Caco-2 (cell line): ENCODE measurements at regions of chr9 and their contacts with region 1.

Region 1: DNA sequence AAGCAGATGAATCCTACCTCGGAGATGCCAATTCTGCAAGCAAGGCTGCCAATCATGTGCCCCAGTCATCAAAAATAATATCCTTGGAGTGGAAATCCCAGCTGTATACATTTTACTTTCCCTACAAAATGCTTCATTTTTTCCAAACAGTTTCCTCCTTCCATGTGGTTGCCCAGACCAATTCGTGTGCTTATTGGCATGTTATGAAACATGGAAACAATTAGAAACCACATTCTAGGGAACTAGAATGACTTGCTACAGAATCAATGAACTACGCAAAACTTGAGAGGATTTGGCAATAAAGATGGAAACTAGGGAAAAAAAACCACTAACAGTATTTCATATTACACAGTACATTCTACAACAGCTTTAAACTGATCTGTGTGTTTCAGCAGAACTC is 584.5 kb upstream of the DMAC1 start:
- DNase-seq: no peak
- H3K4me3 ChIP-seq: no peak overlapping the region
- H3K4me3 Mint-ChIP-seq: peak overlapping the region; percentile 18
- H3K27ac Mint-ChIP-seq: peak overlapping the region; percentile 90
- H3K4me1 ChIP-seq: peaks cover 60% of the 10 kb centered on the region
- H3K4me1 Mint-ChIP-seq: peaks cover 22% of the 10 kb centered on the region
- H3K27me3 ChIP-seq: no peaks in the 10 kb centered on the region
- H3K27me3 Mint-ChIP-seq: no peaks in the 10 kb centered on the region
- CTCF ChIP-seq: no peak

Region 2: GRCh38 chr9:7799234-7799943 is 584.7 kb before region 1 on chr9 and contains the start of gene DMAC1:
- CTCF ChIA-PET with region 1: no interaction called
- POLR2A ChIA-PET with region 1: no interaction called
- intact Hi-C with region 1: loop called (anchors 5 kb)
- DNase-seq: peak; percentile 77 to 78
- H3K4me3 ChIP-seq: peak within 1 kb of the TSS; percentile 81
- H3K4me3 Mint-ChIP-seq: peak within 1 kb of the TSS; percentile 93
- H3K27ac Mint-ChIP-seq: peak within 1 kb of the TSS; percentile 90
- H3K4me1 ChIP-seq: peaks cover 8% of the 10 kb centered on the region
- H3K4me1 Mint-ChIP-seq: no peaks in the 10 kb centered on the region
- H3K27me3 ChIP-seq: no peaks in the 10 kb centered on the region
- H3K27me3 Mint-ChIP-seq: no peaks in the 10 kb centered on the region
- CTCF ChIP-seq: no peak
- total RNA-seq, gene DMAC1: 59.4 and 67.3 TPM in 2 replicates

Region 3: GRCh38 chr9:8025551-8025950 is 358.5 kb before region 1 on chr9:
- CTCF ChIA-PET with region 1: no interaction called
- POLR2A ChIA-PET with region 1: no interaction called
- intact Hi-C with region 1: loop called (anchors 5 kb)
- DNase-seq: no peak
- H3K4me3 ChIP-seq: no peak overlapping the region
- H3K4me3 Mint-ChIP-seq: no peak overlapping the region
- H3K27ac Mint-ChIP-seq: no peak overlapping the region
- H3K4me1 ChIP-seq: no peaks in the 10 kb centered on the region
- H3K4me1 Mint-ChIP-seq: no peaks in the 10 kb centered on the region
- H3K27me3 ChIP-seq: no peaks in the 10 kb centered on the region
- H3K27me3 Mint-ChIP-seq: no peaks in the 10 kb centered on the region
- CTCF ChIP-seq: no peak

Region 4: DNA sequence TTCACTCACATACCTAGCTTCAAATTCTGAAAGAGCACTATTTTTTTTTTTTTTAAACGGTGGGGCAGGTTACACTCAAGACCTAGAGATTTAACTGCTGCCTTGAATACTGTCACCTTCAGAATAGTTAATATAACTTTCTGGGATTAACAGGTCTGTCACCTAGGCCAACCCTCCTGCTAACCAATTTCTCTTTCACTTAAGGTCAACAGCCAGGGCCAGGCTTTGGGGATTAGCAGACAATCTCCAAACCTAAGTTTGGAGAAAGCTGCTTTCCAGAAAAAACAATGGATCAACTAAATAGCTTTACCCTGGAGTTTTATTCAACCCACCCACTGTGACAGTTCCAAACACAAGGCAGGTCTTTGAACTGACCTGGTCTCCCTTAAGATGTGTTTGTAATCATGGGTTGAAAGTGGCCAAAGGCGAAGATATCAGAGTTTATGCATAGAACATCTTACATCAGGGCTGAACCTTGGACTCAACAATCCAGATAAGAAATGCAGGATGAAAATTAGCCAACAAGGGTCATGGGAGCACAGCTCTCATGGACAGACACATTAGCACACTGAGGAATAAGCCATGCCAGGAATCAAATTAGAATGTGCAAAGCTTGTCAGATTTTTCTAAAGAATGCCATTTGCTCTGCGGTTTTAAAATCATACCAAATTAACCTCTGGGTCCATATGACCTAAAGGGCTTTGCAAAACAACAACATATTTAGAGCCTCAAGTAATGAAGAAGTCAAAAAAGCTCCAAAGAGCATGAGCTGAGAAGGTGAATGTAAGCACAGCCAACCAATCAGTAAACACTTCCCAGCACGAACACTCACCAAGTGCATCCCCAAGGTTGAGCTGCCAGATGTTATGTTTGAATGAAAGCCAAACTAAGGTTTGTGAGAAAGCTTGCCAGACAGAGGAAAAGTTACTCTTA is 46.0 kb before region 1 on chr9:
- CTCF ChIA-PET with region 1: no interaction called
- POLR2A ChIA-PET with region 1: no interaction called
- intact Hi-C with region 1: loop called (anchors 1 kb)
- DNase-seq: peak; percentile 40 to 56
- H3K4me3 ChIP-seq: no peak overlapping the region
- H3K4me3 Mint-ChIP-seq: no peak overlapping the region
- H3K27ac Mint-ChIP-seq: no peak overlapping the region
- H3K4me1 ChIP-seq: peaks cover 19% of the 10 kb centered on the region
- H3K4me1 Mint-ChIP-seq: no peaks in the 10 kb centered on the region
- H3K27me3 ChIP-seq: no peaks in the 10 kb centered on the region
- H3K27me3 Mint-ChIP-seq: no peaks in the 10 kb centered on the region
- CTCF ChIP-seq: no peak

Region 5: DNA sequence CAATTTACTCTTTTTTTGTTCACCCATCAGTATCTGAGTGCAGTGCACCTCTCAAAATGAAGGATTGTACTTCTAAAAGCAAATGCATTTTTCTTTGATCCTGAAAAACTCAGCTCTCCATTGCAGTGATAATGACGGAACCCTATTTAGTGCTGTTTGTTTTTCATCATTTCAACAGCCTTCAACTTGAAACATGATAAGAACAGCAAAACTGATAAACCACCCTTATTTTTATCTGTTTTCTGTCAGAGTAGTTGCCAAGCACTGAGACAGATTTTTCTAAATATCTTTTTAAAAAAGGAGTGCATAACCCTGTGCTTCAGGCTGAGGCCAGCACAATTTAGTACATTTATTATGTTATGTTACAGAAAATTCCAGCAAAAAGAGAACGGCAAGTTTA is 34.7 kb before region 1 on chr9:
- CTCF ChIA-PET with region 1: no interaction called
- POLR2A ChIA-PET with region 1: no interaction called
- intact Hi-C with region 1: no loop called
- DNase-seq: no peak
- H3K4me3 ChIP-seq: no peak overlapping the region
- H3K4me3 Mint-ChIP-seq: no peak overlapping the region
- H3K27ac Mint-ChIP-seq: peak overlapping the region; percentile 49
- H3K4me1 ChIP-seq: peaks cover 6% of the 10 kb centered on the region; the same call in 1 of the 2 replicates
- H3K4me1 Mint-ChIP-seq: no peaks in the 10 kb centered on the region
- H3K27me3 ChIP-seq: no peaks in the 10 kb centered on the region
- H3K27me3 Mint-ChIP-seq: no peaks in the 10 kb centered on the region
- CTCF ChIP-seq: no peak

Region 6: DNA sequence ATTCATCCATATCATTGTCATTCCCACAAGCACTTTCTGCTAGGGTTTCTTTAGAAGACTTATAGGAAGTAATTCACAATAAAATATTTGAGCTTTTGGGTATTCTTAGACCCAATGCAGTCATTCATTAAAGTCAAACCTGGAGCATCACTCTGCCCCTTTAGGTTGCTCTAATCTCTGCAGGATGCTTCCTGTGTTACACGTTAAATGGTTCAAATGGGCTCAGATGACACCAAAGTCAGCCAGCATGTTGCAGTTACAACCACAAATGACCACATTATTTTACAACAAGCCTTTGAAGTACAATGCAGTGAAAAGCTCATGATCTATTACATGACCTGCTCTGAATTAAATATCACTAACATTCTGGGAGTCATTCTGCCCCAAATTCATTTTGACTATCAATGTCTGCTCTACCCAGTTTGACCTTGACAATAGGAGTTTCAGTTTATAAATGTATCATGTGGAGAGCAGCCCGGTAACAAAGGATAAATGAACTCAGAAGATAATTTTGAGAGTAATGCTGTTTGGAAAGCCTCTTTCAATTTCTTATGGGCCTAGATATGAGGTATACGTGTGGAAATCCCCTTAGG is 84.0 kb after region 1 on chr9:
- CTCF ChIA-PET with region 1: no interaction called
- POLR2A ChIA-PET with region 1: no interaction called
- intact Hi-C with region 1: loop called (anchors 2 kb)
- DNase-seq: no peak
- H3K4me3 ChIP-seq: no peak overlapping the region
- H3K4me3 Mint-ChIP-seq: no peak overlapping the region
- H3K27ac Mint-ChIP-seq: no peak overlapping the region
- H3K4me1 ChIP-seq: no peaks in the 10 kb centered on the region
- H3K4me1 Mint-ChIP-seq: no peaks in the 10 kb centered on the region
- H3K27me3 ChIP-seq: no peaks in the 10 kb centered on the region
- H3K27me3 Mint-ChIP-seq: no peaks in the 10 kb centered on the region
- CTCF ChIP-seq: no peak

Region 7: GRCh38 chr9:8895861-8896224 is 511.8 kb after region 1 on chr9:
- CTCF ChIA-PET with region 1: no interaction called
- POLR2A ChIA-PET with region 1: no interaction called
- intact Hi-C with region 1: loop called (anchors 10 kb)
- DNase-seq: peak in 1 of 2 experiments; percentile 36
- H3K4me3 ChIP-seq: no peak overlapping the region
- H3K4me3 Mint-ChIP-seq: no peak overlapping the region
- H3K27ac Mint-ChIP-seq: no peak overlapping the region
- H3K4me1 ChIP-seq: no peaks in the 10 kb centered on the region
- H3K4me1 Mint-ChIP-seq: no peaks in the 10 kb centered on the region
- H3K27me3 ChIP-seq: no peaks in the 10 kb centered on the region
- H3K27me3 Mint-ChIP-seq: no peaks in the 10 kb centered on the region
- CTCF ChIP-seq: peak; percentile 41 to 55